Brain microvascular endothelial cell (primary cell): ENCODE measurements at regions of chr4 and their contacts with region 1.

Region 1: DNA sequence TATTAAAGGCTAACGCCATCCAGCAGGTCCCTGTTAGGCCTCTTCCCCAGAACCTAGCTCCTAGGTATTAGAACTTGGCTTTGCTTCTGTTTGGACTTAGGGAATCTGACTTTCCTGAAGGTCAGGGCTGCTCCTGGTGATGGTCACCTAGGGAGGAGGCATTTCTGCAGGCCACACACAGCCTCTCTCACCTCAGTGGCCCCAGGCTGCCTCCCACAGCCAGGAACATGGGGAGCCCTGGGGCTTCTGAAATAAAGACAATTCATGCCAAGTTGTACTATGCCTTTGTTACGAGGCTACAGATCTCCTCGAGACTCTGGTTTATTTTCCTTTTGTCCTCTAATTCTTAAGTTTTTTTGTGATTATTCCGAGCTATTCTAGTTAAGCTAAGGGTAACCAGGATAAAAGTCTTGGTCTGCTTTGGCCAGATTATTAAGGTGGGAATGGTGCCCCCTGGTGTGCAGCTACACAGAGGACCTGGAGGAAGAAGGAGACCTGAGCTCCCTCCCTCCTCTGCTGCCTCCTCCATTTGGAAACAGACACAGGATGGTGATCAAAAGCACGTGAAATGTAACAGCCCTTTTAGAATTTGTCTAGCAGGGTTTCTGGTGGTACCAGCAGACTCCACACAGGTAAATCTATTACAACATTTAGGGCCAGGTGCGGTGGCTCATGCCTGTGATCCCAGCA is 131.0 kb downstream of the DCLK2 start:
- DNase-seq: peak; percentile 66
- H3K4me3 ChIP-seq: no peak overlapping the region
- H3K27ac ChIP-seq: no peak overlapping the region
- H3K27me3 ChIP-seq: no peaks in the 10 kb centered on the region
- CTCF ChIP-seq: peak; percentile 84

Region 2: DNA sequence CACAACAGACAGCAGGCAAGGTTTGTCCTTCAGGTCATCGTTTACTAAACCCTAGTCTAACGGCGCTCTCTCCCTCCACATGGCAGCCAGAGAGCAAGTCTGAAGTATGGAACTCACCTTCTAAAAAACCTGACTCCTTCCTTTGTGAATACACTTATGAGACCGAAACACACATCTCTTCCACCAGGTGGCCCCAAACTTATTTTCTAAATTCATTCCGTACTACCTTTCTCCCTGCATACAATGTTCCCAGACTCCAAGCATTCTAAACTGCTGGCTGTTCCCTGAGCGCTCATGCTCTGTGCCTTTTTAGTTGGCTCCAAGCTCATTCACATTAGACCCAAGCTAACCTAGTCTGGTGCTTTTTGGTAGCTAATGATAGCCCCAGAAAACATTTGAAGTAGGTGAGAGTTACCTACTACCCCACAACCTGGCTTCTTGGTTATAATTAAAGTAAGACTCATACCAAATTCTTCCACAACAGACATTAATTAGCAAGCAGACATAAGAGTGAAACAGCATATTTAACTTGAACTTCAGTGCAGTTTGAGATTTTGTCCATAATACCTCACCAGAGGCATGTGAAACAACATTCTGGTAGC is 198.7 kb before region 1 on chr4:
- in situ Hi-C with region 1: loop called (anchors 25 kb)
- DNase-seq: peak; percentile 71
- H3K4me3 ChIP-seq: no peak overlapping the region
- H3K27ac ChIP-seq: no peak overlapping the region
- H3K27me3 ChIP-seq: no peaks in the 10 kb centered on the region
- CTCF ChIP-seq: peak; percentile 63